ENCODE measurements at regions of chr1 and their contacts with region 1.

Region 1: DNA sequence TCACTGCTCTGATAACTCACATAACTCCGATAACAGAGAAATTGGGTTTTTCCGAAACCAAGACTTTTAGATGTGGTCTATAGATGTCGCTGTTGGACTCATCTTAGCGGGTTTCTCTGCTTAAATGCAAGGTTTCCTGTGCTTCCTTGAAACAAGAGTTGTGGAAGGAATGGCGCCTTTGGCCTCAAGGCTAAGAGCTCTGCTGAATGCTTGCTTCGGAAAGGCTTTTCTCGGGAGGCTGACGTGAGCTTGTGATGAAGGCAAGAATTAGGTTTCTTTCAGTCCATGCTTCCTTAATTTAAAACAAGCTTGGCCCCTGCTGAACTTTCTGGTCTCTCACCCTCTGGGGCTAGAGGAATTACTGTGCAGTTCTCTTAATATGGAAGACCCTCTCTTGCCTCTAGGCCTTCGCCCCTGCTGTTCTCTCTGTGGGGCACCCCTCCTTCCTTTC is 113.5 kb downstream of the MAP3K21 start:
- DNase-seq: peak; percentile 54
- ATAC-seq: peak; percentile 85
- H3K4me3 ChIP-seq: no peak overlapping the region
- H3K27ac ChIP-seq: no peak overlapping the region
- H3K4me1 ChIP-seq: no peaks in the 10 kb centered on the region
- H3K27me3 ChIP-seq: no peaks in the 10 kb centered on the region
- CTCF ChIP-seq: peak; percentile 60 to 86 (median 66)
- EP300 ChIP-seq: no peak
- POLR2A ChIP-seq: no peak
- RAD21 ChIP-seq: peak; percentile 98

Region 2: DNA sequence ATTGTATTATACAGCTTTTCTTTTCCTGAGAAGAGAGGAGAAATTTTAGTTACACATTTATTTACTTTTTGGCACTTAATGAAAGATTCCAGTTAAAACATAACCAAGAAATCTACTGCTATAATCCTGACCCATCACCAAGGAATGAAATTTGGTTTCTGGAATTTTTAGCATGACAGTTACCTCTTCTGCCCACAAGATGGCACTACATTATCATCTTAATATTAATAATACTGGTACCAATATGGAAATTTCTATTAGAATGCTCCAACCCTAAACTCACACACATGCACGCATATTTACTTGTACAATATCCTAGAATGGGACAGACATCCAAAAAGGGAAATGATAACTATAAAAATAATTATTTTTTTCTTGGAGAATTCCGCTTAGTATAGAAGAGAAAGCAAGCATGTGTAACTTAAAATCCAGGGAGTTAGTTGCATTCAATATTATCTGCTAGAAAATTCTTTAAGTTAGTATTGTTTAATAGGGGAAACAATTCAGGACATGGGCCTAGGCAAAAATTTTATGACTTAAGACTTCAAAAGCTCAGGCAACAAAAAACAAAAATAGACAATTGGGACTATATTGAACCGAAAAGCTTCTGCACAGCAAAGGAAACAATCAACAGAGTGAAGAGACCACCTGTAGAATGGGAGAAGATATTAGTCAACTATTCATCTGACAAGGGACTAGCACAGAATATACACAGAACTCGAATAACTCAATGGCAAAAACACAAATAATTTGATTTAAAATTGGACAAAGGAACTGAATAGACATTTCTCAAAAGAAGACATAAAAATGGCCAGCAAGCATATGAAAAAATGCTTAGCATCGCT is 76.1 kb before region 1 on chr1:
- CTCF ChIA-PET with region 1: interaction called, 11 read pairs
- POLR2A ChIA-PET with region 1: no interaction called
- RAD21 ChIA-PET with region 1: no interaction called
- SMC1A ChIA-PET with region 1: interaction called, 6 read pairs
- in situ Hi-C with region 1: no loop called
- intact Hi-C with region 1: no loop called
- DNase-seq: no peak
- ATAC-seq: 0 out of 3 replicates have a peak, but pooled peaks have one; percentile 19
- H3K4me3 ChIP-seq: no peak overlapping the region
- H3K27ac ChIP-seq: no peak overlapping the region
- H3K4me1 ChIP-seq: no peaks in the 10 kb centered on the region
- H3K27me3 ChIP-seq: no peaks in the 10 kb centered on the region
- CTCF ChIP-seq: peak; percentile 45 to 53 (median 52); a peak in 4 of 6 replicates
- EP300 ChIP-seq: no peak
- POLR2A ChIP-seq: no peak
- RAD21 ChIP-seq: peak; percentile 49; the same call in 1 of the 2 replicates

Region 3: DNA sequence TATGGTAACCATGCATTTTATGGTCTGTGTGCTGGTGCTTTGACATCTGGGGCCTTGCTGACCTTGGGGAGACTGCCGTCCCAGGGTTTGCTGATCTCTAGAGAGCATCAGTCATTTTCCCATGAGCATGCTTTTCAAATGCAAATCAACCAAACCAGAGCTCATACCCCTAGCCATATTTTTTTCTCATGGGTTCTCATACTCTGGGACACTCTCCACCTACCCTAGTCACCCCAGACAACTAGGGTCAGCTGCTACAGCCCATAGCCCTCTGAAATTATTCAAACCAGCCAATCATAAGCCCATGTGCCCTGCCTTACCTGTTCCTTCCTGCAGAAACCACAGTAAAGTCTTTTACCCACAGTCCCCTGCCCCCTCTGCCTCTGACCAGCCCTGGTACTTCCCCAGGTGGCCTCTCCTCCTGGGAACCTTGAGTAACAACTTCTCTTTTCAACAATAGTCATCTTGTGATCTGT is 18.5 kb after region 1 on chr1:
- CTCF ChIA-PET with region 1: interaction called, 11 read pairs
- POLR2A ChIA-PET with region 1: no interaction called
- RAD21 ChIA-PET with region 1: interaction called, 28 read pairs
- SMC1A ChIA-PET with region 1: interaction called, 35 read pairs
- in situ Hi-C with region 1: no loop called
- intact Hi-C with region 1: no loop called
- DNase-seq: peak; percentile 83
- ATAC-seq: peak; percentile 90
- H3K4me3 ChIP-seq: no peak overlapping the region
- H3K27ac ChIP-seq: no peak overlapping the region
- H3K4me1 ChIP-seq: peaks cover 8% of the 10 kb centered on the region
- H3K27me3 ChIP-seq: no peaks in the 10 kb centered on the region
- CTCF ChIP-seq: no peak
- EP300 ChIP-seq: peak; percentile 59 to 60; a peak in 3 of 4 replicates
- POLR2A ChIP-seq: no peak
- RAD21 ChIP-seq: no peak

Region 4: DNA sequence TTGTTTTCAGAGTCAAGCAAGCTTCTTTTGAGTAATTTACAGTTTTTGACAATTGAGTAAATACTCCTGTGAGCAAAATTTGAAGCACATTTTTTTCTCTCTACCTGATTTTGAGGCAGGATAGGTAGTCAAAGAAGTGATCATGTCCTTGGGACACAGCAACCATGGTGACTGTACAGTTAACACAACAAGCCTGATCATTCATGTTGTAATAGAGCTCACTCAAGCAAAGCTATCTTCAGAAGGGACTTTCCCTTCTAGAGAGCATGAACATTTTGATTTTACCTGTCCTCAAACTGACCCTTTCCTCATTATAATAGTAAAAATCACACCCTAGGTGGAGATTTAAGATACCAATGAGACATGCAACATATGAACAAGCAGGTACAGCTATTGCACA is 46.4 kb after region 1 on chr1:
- CTCF ChIA-PET with region 1: interaction called, 14 read pairs
- POLR2A ChIA-PET with region 1: no interaction called
- RAD21 ChIA-PET with region 1: interaction called, 13 read pairs
- SMC1A ChIA-PET with region 1: interaction called, 5 read pairs
- in situ Hi-C with region 1: no loop called
- intact Hi-C with region 1: no loop called
- DNase-seq: no peak
- ATAC-seq: peak; percentile 89
- H3K4me3 ChIP-seq: no peak overlapping the region
- H3K27ac ChIP-seq: no peak overlapping the region
- H3K4me1 ChIP-seq: no peaks in the 10 kb centered on the region
- H3K27me3 ChIP-seq: no peaks in the 10 kb centered on the region
- CTCF ChIP-seq: no peak
- EP300 ChIP-seq: peak in 1 of 2 experiments; percentile 38; a peak in 1 of 4 replicates
- POLR2A ChIP-seq: no peak
- RAD21 ChIP-seq: no peak

Region 5: DNA sequence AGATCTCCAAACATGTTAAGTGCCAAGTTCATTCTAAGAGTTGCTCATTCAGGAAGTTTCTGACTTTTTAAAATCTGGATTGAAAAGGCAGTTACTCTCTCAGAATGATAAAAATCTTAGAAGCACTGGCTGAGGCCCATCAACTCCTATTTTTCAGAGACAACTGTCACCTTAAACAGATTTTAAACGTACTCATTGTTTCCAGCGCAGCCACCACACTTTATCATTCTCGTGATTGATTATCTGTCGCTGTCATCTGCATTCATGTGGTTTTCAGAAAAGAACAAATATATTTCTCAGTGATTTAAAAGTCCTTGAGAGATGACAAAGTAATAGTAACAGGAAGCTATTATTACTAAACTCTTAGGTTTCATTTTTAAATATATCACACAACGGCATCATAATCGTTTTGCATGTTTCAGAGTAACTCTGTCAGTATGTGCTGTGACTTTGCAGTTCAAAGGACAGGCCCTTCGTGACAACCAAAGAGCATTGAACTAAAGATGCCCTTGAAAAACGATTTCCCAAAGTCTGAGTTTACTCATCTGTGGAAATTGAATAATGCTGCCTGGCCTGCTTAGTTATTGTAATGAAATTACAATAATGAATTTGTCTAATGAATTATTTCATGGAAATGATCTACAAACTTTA is 158.0 kb after region 1 on chr1:
- CTCF ChIA-PET with region 1: interaction called, 24 read pairs
- POLR2A ChIA-PET with region 1: no interaction called
- RAD21 ChIA-PET with region 1: interaction called, 41 read pairs
- SMC1A ChIA-PET with region 1: interaction called, 16 read pairs
- in situ Hi-C with region 1: no loop called
- intact Hi-C with region 1: loop called (anchors 2 kb)
- DNase-seq: peak; percentile 76
- ATAC-seq: peak; percentile 82
- H3K4me3 ChIP-seq: peak overlapping the region; percentile 33; the same call in 1 of the 2 replicates
- H3K27ac ChIP-seq: peak overlapping the region; percentile 96
- H3K4me1 ChIP-seq: peaks cover 30% of the 10 kb centered on the region
- H3K27me3 ChIP-seq: no peaks in the 10 kb centered on the region
- CTCF ChIP-seq: no peak
- EP300 ChIP-seq: peak; percentile 94 to 98
- POLR2A ChIP-seq: no peak
- RAD21 ChIP-seq: no peak

Region 6: DNA sequence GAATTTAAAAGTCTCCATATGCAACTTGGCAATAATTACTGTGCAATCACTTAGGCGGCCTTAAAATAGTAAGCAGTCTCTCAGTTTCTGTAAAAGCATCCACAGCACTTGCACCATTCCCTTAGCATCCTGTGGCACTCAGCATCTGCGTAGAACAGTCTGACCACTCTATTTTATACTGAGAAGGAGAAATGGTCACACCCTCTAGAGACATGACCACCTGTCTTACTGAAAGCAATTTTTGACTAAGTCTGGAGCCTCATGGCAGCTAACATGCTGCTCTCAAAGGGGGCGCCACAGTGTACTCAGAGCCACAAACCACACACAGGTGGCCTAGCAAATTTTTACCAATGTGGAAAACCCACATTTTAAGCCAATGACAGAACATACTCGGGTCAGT is 234.9 kb after region 1 on chr1:
- CTCF ChIA-PET with region 1: interaction called, 12 read pairs
- POLR2A ChIA-PET with region 1: no interaction called
- RAD21 ChIA-PET with region 1: interaction called, 10 read pairs
- SMC1A ChIA-PET with region 1: interaction called, 13 read pairs
- in situ Hi-C with region 1: no loop called
- intact Hi-C with region 1: loop called (anchors 2 kb)
- DNase-seq: peak; percentile 75
- ATAC-seq: peak; percentile 88
- H3K4me3 ChIP-seq: no peak overlapping the region
- H3K27ac ChIP-seq: peak overlapping the region; percentile 1
- H3K4me1 ChIP-seq: peaks cover 19% of the 10 kb centered on the region
- H3K27me3 ChIP-seq: no peaks in the 10 kb centered on the region
- CTCF ChIP-seq: peak; percentile 16 to 19 (median 18); a peak in 1 of 6 replicates
- EP300 ChIP-seq: peak; percentile 70 to 88; a peak in 3 of 4 replicates
- POLR2A ChIP-seq: no peak
- RAD21 ChIP-seq: no peak

Region 7: GRCh38 chr1:233796146-233796783 is 355.3 kb after region 1 on chr1:
- CTCF ChIA-PET with region 1: interaction called, 143 read pairs
- POLR2A ChIA-PET with region 1: no interaction called
- RAD21 ChIA-PET with region 1: interaction called, 81 read pairs
- SMC1A ChIA-PET with region 1: interaction called, 107 read pairs
- in situ Hi-C with region 1: loop called (anchors 5 kb)
- intact Hi-C with region 1: loop called (anchors 1 kb)
- DNase-seq: peak; percentile 17
- ATAC-seq: peak; percentile 92
- H3K4me3 ChIP-seq: no peak overlapping the region
- H3K27ac ChIP-seq: no peak overlapping the region
- H3K4me1 ChIP-seq: no peaks in the 10 kb centered on the region
- H3K27me3 ChIP-seq: no peaks in the 10 kb centered on the region; a peak in 1 of 4 replicates
- CTCF ChIP-seq: no peak
- EP300 ChIP-seq: no peak
- POLR2A ChIP-seq: no peak
- RAD21 ChIP-seq: no peak

Measured in GM12878 (cell line).